ENCODE measurements at regions of chr1 and their contacts with region 1.

Region 1: GRCh38 chr1:210233216-210234020 is 822 bp downstream of the SERTAD4 start:
- DNase-seq: peak in 1 of 2 experiments; percentile 42
- H3K4me3 ChIP-seq: peak overlapping the region; percentile 47
- H3K4me3 Mint-ChIP-seq: peak overlapping the region; percentile 72
- H3K27ac Mint-ChIP-seq: no peak overlapping the region
- H3K4me1 ChIP-seq: peaks cover 3% of the 10 kb centered on the region; the same call in 1 of the 2 replicates
- H3K4me1 Mint-ChIP-seq: no peaks in the 10 kb centered on the region
- H3K27me3 ChIP-seq: no peaks in the 10 kb centered on the region
- H3K27me3 Mint-ChIP-seq: no peaks in the 10 kb centered on the region
- CTCF ChIP-seq: no peak

Region 2: DNA sequence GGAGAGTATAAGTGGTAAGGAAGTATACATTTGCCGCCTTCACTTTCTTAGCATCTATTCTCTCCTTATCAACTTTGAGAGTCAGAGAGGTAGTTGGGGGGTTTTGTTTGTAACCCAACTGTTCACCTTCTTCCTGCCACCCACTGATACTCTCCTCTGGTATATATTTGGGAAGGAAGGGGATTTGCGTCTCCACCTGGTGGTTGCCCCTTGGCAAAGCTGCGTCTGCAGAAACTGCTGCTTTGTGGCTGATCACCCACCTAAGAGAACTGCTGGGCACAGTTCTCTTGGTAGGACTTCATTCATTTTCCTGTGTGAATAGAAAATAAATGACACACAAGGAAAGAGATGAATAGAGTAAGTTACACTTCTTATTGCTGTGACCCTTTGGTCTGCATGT is 208.4 kb before region 1 on chr1:
- CTCF ChIA-PET with region 1: no interaction called
- POLR2A ChIA-PET with region 1: no interaction called
- intact Hi-C with region 1: no loop called
- DNase-seq: no peak
- H3K4me3 ChIP-seq: no peak overlapping the region
- H3K4me3 Mint-ChIP-seq: no peak overlapping the region
- H3K27ac Mint-ChIP-seq: no peak overlapping the region
- H3K4me1 ChIP-seq: no peaks in the 10 kb centered on the region
- H3K4me1 Mint-ChIP-seq: no peaks in the 10 kb centered on the region
- H3K27me3 ChIP-seq: no peaks in the 10 kb centered on the region
- H3K27me3 Mint-ChIP-seq: no peaks in the 10 kb centered on the region
- CTCF ChIP-seq: no peak

Region 3: GRCh38 chr1:210170220-210170619 is 63.2 kb before region 1 on chr1:
- CTCF ChIA-PET with region 1: no interaction called
- POLR2A ChIA-PET with region 1: no interaction called
- intact Hi-C with region 1: loop called (anchors 5 kb)
- DNase-seq: no peak
- H3K4me3 ChIP-seq: no peak overlapping the region
- H3K4me3 Mint-ChIP-seq: no peak overlapping the region
- H3K27ac Mint-ChIP-seq: no peak overlapping the region
- H3K4me1 ChIP-seq: peaks cover 19% of the 10 kb centered on the region
- H3K4me1 Mint-ChIP-seq: peaks cover 13% of the 10 kb centered on the region
- H3K27me3 ChIP-seq: no peaks in the 10 kb centered on the region
- H3K27me3 Mint-ChIP-seq: no peaks in the 10 kb centered on the region
- CTCF ChIP-seq: no peak

Region 4: GRCh38 chr1:210250998-210251679 is 17.7 kb after region 1 on chr1:
- CTCF ChIA-PET with region 1: interaction called, 6 read pairs
- POLR2A ChIA-PET with region 1: no interaction called
- intact Hi-C with region 1: loop called (anchors 2 kb)
- DNase-seq: peak; percentile 79 to 80
- H3K4me3 ChIP-seq: peak overlapping the region; percentile 46
- H3K4me3 Mint-ChIP-seq: peak overlapping the region; percentile 67
- H3K27ac Mint-ChIP-seq: peak overlapping the region; percentile 11
- H3K4me1 ChIP-seq: peaks cover 15% of the 10 kb centered on the region
- H3K4me1 Mint-ChIP-seq: peaks cover 10% of the 10 kb centered on the region
- H3K27me3 ChIP-seq: no peaks in the 10 kb centered on the region
- H3K27me3 Mint-ChIP-seq: peaks cover 4% of the 10 kb centered on the region
- CTCF ChIP-seq: no peak